ENCODE measurements at regions of chr12 and their contacts with region 1.

Region 1: GRCh38 chr12:89882050-89882449 is 173.4 kb upstream of the ATP2B1 start:
- DNase-seq: peak in 1 of 2 donors; percentile 44
- ATAC-seq: no peak
- H3K4me3 ChIP-seq: no peak overlapping the region
- H3K4me3 Mint-ChIP-seq: peak overlapping the region; percentile 25
- H3K27ac ChIP-seq: peak overlapping the region; percentile 82
- H3K27ac Mint-ChIP-seq: peak overlapping the region; percentile 96
- H3K4me1 ChIP-seq: peaks cover 16% of the 10 kb centered on the region
- H3K4me1 Mint-ChIP-seq: peaks cover 33 to 45% of the 10 kb centered on the region in 2 donors
- H3K27me3 ChIP-seq: no peaks in the 10 kb centered on the region
- H3K27me3 Mint-ChIP-seq: peaks cover 0 to 2% of the 10 kb centered on the region in 2 donors
- CTCF ChIP-seq: no peak

Region 2: GRCh38 chr12:89862511-89863179 is 19.4 kb before region 1 on chr12:
- intact Hi-C with region 1: loop called (anchors 2 kb)
- DNase-seq: peak; percentile 23 to 81
- ATAC-seq: peak; percentile 52 to 79 (median 54)
- H3K4me3 ChIP-seq: peak overlapping the region; percentile 34
- H3K4me3 Mint-ChIP-seq: peak overlapping the region; percentile 86
- H3K27ac ChIP-seq: peak overlapping the region; percentile 97
- H3K27ac Mint-ChIP-seq: peak overlapping the region; percentile 94 to 96
- H3K4me1 ChIP-seq: peaks cover 16% of the 10 kb centered on the region
- H3K4me1 Mint-ChIP-seq: peaks cover 30 to 42% of the 10 kb centered on the region in 2 donors
- H3K27me3 ChIP-seq: no peaks in the 10 kb centered on the region
- H3K27me3 Mint-ChIP-seq: no peaks in the 10 kb centered on the region
- CTCF ChIP-seq: no peak

Measured in natural killer cell (primary cell).